Mammary epithelial cell (primary cell): ENCODE measurements at regions of chr3 and their contacts with region 1.

Region 1: GRCh38 chr3:43540624-43541023 is 81.2 kb downstream of the ANO10 start:
- DNase-seq: no peak
- H3K4me3 ChIP-seq: no peak overlapping the region
- H3K27ac ChIP-seq: no peak overlapping the region
- H3K4me1 ChIP-seq: no peaks in the 10 kb centered on the region
- H3K27me3 ChIP-seq: no peaks in the 10 kb centered on the region
- CTCF ChIP-seq: no peak

Region 2: DNA sequence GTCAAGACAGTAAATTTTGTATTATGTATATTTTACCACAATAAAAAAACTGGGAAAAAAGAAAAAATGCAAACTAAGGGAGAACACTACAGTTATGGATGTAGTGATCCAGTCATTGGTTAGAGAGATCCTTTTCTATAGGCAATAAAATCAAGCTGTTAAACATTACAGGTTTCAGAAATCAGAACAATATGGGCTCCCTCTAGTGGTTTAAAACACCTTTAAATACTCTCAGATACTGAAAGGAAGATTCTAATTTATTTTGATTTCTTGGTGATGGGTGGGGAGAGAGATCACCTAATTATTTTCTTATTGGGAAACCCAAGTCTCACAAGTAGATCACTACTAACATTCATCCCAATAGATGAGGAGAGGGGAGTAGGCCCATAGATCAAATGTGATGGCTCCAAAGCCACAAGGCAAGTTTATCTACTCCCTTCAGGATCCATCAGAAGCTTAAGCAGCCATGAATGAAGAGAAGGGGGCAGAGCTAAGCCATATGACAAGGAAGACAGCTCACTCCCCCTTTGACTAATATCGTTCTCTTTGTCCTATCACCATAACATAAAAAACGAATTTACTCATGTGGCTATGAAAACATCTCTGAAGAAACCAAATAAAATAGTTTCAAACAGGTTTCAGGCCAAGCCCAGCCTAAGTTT is 37.4 kb before region 1 on chr3:
- CTCF ChIA-PET with region 1: no interaction called
- dilution Hi-C with region 1: no loop called
- in situ Hi-C with region 1: no loop called
- intact Hi-C with region 1: no loop called
- DNase-seq: no peak
- H3K4me3 ChIP-seq: no peak overlapping the region
- H3K27ac ChIP-seq: no peak overlapping the region
- H3K4me1 ChIP-seq: peaks cover 3% of the 10 kb centered on the region
- H3K27me3 ChIP-seq: no peaks in the 10 kb centered on the region
- CTCF ChIP-seq: peak; percentile 45 to 48

Region 3: DNA sequence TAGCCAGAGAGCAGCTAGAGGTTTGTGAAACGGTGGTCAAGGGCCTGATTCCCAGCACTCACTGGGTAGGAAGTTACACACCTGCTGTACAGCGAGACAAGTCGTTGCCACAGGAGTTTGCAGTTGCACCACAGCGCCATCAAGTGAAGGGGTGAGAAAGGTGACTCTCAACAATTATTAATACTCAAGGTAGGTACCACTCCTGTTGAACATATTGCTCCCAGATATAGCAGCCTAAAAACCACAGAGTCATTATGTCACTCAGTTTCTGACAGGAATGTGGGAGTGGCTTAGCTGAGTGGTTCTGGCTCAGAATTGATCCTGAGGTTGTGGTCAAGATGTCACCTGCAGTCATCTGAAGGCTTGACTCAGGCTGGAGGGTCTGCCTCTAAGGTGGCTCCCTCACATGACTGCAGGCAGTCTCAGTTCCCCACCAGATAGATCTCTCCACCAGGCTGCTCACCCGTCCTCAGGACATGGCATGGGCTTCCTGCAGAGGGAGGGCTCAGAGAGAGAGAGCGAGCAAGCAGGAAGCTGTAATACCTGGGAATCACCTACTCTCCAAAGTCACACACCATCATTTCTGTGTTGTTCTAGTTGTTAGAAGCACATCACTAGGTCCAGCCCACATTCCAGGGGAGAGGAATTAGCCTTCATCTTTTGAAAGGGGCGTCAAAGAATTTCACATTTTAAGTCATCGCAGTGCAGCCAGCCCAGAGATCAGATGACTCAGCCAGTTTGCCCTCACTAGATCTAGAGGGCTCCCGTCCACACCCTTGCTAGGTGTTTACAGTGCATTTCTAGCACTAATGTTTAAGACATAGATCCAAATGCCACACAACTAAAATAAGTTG is 98.2 kb after region 1 on chr3:
- CTCF ChIA-PET with region 1: no interaction called
- dilution Hi-C with region 1: no loop called
- in situ Hi-C with region 1: no loop called
- intact Hi-C with region 1: loop called (anchors 2 kb)
- DNase-seq: peak; percentile 58
- H3K4me3 ChIP-seq: no peak overlapping the region
- H3K27ac ChIP-seq: no peak overlapping the region
- H3K4me1 ChIP-seq: peaks cover 9% of the 10 kb centered on the region
- H3K27me3 ChIP-seq: no peaks in the 10 kb centered on the region
- CTCF ChIP-seq: peak; percentile 51 to 57

Region 4: DNA sequence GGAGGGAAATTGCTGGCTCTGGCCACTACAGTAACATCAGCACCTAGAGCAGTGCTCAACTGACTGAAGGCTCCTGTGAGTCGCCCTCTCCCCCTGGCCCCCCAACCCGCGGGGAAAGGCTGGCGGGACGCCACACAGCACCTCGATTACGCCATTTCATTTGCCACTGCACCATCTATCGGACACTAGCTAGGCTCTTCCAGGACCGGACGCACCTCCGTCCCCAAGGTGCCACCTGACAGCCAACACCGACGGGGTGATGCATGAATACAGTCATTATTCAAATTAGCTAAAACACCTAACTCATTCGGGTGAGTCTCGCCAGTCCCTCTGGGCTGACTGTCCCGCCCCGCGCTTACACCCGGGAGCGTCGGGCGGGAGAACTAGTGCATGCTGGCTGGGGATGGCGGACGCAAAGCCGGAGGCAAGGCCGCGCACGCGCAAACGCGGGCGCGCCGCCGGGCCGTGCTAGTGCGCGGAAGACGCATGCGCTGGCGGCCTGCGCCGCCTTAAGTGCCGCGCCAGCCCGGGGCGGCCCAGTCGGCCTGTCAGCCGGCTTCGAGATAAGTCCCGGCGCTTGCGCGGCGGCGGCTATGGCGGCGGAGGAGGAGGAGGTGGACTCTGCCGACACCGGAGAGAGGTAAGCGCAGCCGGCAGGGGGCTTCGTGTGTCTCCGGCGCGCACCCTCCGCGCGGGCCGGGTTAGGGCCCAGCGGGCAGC is 149.9 kb after region 1 on chr3 and contains the start of gene ABHD5:
- CTCF ChIA-PET with region 1: no interaction called
- dilution Hi-C with region 1: no loop called
- in situ Hi-C with region 1: no loop called
- intact Hi-C with region 1: loop called (anchors 2 kb)
- DNase-seq: peak; percentile 95
- H3K4me3 ChIP-seq: peak within 1 kb of the TSS; percentile 74 to 87 (median 85)
- H3K27ac ChIP-seq: peak within 1 kb of the TSS; percentile 55
- H3K4me1 ChIP-seq: peaks cover 42% of the 10 kb centered on the region
- H3K27me3 ChIP-seq: no peaks in the 10 kb centered on the region
- CTCF ChIP-seq: peak in 1 of 2 donors; percentile 29
- total RNA-seq, gene ABHD5: 37.9 to 59.8 TPM

Region 5: DNA sequence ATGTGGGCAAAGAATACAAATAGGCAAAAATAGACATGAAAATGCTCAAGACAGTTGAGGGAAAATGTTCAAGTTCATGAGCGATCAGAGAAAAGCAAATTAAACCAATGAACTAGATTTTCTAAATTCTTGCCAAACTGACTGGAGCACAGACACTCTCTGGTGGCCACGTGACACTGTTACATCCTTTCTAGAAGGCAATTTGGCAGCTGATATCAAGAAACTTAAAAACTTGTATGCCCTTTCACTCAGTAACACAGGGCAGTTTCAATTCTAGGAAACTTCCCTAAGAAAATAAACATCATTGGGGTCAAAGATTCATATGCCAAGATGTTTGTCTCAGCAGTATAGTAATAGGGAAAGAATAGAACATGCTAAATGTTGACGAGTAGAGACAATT is 202.3 kb after region 1 on chr3:
- CTCF ChIA-PET with region 1: no interaction called
- dilution Hi-C with region 1: no loop called
- in situ Hi-C with region 1: no loop called
- intact Hi-C with region 1: loop called (anchors 5 kb)
- DNase-seq: no peak
- H3K4me3 ChIP-seq: no peak overlapping the region
- H3K27ac ChIP-seq: no peak overlapping the region
- H3K4me1 ChIP-seq: peaks cover 2% of the 10 kb centered on the region
- H3K27me3 ChIP-seq: no peaks in the 10 kb centered on the region
- CTCF ChIP-seq: peak; percentile 17 to 18

Region 6: DNA sequence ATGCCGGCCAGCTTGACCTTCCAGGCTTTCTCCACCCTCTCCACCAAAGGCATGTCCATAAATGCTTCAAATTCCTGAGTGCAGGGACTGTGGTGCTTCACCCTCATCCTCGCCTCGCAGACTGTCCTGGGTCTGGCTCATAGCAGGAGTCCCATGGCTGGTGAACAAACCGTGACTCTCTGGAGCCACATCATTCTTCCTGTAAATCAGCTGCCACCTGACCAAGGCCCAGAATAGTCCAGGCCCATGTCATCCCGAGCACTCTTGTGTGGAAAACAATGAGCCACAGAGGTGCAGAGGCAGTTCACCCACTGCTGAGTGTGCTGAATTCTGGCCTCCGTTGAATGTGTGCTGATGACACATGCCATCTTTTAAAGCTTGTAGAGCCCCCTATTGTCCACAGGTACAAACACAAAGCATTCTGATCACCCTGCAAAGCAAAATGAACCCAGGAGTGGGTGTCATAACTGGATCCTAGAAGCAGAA is 218.7 kb after region 1 on chr3:
- CTCF ChIA-PET with region 1: no interaction called
- dilution Hi-C with region 1: no loop called
- in situ Hi-C with region 1: no loop called
- intact Hi-C with region 1: loop called (anchors 1 kb)
- DNase-seq: peak; percentile 67
- H3K4me3 ChIP-seq: no peak overlapping the region
- H3K27ac ChIP-seq: no peak overlapping the region
- H3K4me1 ChIP-seq: peaks cover 26% of the 10 kb centered on the region
- H3K27me3 ChIP-seq: no peaks in the 10 kb centered on the region
- CTCF ChIP-seq: peak; percentile 26 to 44

Region 7: DNA sequence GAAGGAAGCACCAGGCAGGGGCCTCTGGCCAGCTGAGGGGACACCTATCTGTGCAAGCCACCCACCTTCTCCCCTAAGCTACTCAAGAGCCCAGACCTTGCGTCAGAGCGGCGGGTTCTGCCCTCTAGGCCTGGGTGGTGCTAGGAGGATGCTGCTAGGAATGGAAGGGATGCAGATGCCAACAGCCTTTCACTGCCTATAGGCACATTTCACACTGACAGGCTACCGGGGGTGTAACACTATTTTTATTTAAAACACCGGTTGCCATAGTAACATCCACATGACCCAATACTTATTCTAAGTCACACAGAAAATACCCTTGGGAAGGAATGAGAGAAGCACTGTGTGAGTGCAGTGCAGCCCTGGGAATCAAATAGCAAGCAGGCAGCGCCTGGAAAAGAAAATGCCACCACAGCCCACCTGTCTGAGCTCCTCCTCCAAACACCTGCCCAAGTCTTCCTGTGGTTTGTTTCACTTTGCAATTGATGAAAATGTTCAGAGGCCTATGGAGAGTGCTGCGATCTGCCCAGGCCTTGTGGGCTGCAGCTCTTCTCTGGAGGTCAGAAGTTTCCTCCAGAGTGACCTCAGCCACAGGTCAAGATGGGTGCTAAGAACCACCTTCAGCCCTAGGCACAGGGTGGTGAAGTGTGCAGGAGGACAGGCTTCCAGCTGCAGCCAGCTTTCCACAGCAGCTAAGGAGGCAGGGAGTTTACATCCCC is 587.6 kb after region 1 on chr3:
- CTCF ChIA-PET with region 1: no interaction called
- dilution Hi-C with region 1: no loop called
- in situ Hi-C with region 1: no loop called
- intact Hi-C with region 1: loop called (anchors 2 kb)
- DNase-seq: no peak
- H3K4me3 ChIP-seq: no peak overlapping the region
- H3K27ac ChIP-seq: no peak overlapping the region
- H3K4me1 ChIP-seq: peaks cover 22% of the 10 kb centered on the region
- H3K27me3 ChIP-seq: no peaks in the 10 kb centered on the region
- CTCF ChIP-seq: no peak